K562 (cell line): ENCODE measurements at regions of chr7 and their contacts with region 1.

Region 1: GRCh38 chr7:129774359-129774758 is 162.8 kb downstream of the NRF1 start:
- DNase-seq: no peak
- ATAC-seq: 0 out of 3 replicates have a peak, but pooled peaks have one; percentile 2
- H3K4me3 ChIP-seq: no peak overlapping the region
- H3K27ac ChIP-seq: no peak overlapping the region
- H3K4me1 ChIP-seq: peaks cover 23 to 86% of the 10 kb centered on the region in 2 experiments
- H3K27me3 ChIP-seq: no peaks in the 10 kb centered on the region
- CTCF ChIP-seq: no peak
- EP300 ChIP-seq: no peak
- POLR2A ChIP-seq: no peak
- RAD21 ChIP-seq: no peak

Region 2: GRCh38 chr7:129343099-129343700 is 431.2 kb before region 1 on chr7:
- CTCF ChIA-PET with region 1: no interaction called
- POLR2A ChIA-PET with region 1: no interaction called
- in situ Hi-C with region 1: no loop called
- intact Hi-C with region 1: no loop called
- DNase-seq: peak; percentile 56 to 77 (median 60)
- ATAC-seq: peak; percentile 93
- H3K4me3 ChIP-seq: no peak overlapping the region
- H3K27ac ChIP-seq: no peak overlapping the region
- H3K4me1 ChIP-seq: peaks cover 0 to 9% of the 10 kb centered on the region in 2 experiments; a peak in 2 of 5 replicates
- H3K27me3 ChIP-seq: no peaks in the 10 kb centered on the region
- CTCF ChIP-seq: peak; percentile 68 to 96 (median 72); a peak in 5 of 6 replicates
- EP300 ChIP-seq: no peak
- POLR2A ChIP-seq: no peak
- RAD21 ChIP-seq: peak; percentile 86 to 88

Region 3: GRCh38 chr7:129762438-129762837 is 11.9 kb before region 1 on chr7:
- CTCF ChIA-PET with region 1: no interaction called
- POLR2A ChIA-PET with region 1: interaction called, 11 read pairs
- in situ Hi-C with region 1: no loop called
- intact Hi-C with region 1: no loop called
- DNase-seq: no peak
- ATAC-seq: no peak
- H3K4me3 ChIP-seq: no peak overlapping the region
- H3K27ac ChIP-seq: no peak overlapping the region
- H3K4me1 ChIP-seq: peaks cover 12 to 31% of the 10 kb centered on the region in 2 experiments; a peak in 4 of 5 replicates
- H3K27me3 ChIP-seq: no peaks in the 10 kb centered on the region
- CTCF ChIP-seq: no peak
- EP300 ChIP-seq: no peak
- POLR2A ChIP-seq: no peak
- RAD21 ChIP-seq: no peak